Heart left ventricle (tissue), 16 donors: ENCODE measurements at regions of chr1 and their contacts with region 1.

Region 1: GRCh38 chr1:10867138-10867721 is 70.8 kb upstream of the CASZ1 start:
- DNase-seq: peak; percentile 42 to 77 (median 57)
- ATAC-seq: peak in 3 of 4 donors; percentile 38 to 81 (median 77)
- H3K4me3 ChIP-seq: peak overlapping the region in 11 of 12 donors; percentile 18 to 61 (median 49)
- H3K27ac ChIP-seq: peak overlapping the region in 2 of 12 donors; percentile 23 to 65
- H3K4me1 ChIP-seq: peaks cover 0 to 35% (median 13%) of the 10 kb centered on the region in 12 donors
- H3K27me3 ChIP-seq: peaks cover 0 to 67% (median 13%) of the 10 kb centered on the region in 9 donors
- CTCF ChIP-seq: peak; percentile 26 to 96 (median 78)
- POLR2A ChIP-seq: no peak

Region 2: DNA sequence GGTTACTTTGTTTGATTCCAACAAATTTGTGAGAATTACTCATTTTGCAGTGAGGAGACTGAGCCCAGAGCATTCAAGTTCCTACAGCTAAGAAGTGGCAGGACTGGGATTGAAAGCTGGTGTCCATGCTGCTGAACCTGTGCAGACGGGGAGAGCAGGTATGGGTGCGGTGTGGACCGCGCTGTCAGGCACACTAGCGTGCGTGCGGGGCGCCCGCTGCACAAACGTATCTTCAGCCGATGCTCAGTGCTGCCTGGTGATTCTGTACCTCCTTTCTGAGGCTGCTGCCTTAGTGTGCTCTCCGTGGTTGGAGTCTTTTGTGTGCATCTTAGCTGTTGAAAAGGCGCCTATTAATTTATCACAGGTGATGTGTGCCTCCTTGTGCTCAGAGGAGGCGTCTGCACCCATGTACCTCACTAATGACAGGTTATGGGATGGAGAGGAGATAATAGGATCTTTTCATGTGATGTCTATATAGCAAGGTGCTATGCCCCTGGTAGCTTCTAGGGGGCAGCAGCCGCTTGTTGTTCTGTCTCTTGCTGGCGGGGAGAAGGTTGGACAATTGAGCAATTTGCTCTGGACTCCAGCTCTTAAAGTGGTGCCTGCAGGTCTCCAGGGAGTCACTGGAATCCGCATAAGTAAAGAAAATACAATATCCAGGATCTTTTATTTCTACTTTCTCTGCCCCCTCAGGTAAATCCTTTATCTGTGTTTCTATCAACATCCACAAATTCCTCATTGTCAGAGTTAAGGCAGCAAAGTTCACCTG is 359.9 kb before region 1 on chr1:
- intact Hi-C with region 1: loop called in 8 of 10 experiments (anchors 1 to 5 kb)
- DNase-seq: peak; percentile 49 to 71 (median 66)
- ATAC-seq: peak; percentile 71 to 90 (median 85)
- H3K4me3 ChIP-seq: no peak overlapping the region
- H3K27ac ChIP-seq: no peak overlapping the region
- H3K4me1 ChIP-seq: peaks cover 0 to 37% (median 26%) of the 10 kb centered on the region in 12 donors
- H3K27me3 ChIP-seq: no peaks in the 10 kb centered on the region
- CTCF ChIP-seq: peak; percentile 73 to 90 (median 80)
- POLR2A ChIP-seq: no peak

Region 3: DNA sequence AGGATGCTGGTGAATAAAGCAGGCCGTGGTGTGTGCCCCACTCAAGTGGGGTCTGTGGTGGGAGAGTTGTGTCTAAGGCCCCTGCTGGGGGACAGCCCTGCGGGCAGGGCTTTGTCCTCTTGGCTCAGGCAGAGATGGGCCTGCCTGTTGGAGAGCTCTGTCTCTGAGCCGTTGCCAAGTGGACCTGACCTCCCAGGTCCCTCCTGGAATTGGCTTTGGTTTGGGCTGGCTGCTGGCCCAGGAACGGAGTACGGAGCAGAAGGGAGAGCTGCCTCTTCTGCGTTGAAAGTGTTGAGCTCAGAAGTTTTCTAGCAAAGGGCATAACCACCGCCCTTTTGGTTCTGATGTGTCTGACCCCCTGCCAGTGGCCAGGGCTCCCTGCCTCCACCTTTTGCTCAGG is 238.5 kb before region 1 on chr1:
- intact Hi-C with region 1: loop called in 1 of 10 experiments (anchors 10 kb)
- DNase-seq: peak; percentile 77 to 89 (median 82)
- ATAC-seq: peak; percentile 66 to 85 (median 78)
- H3K4me3 ChIP-seq: no peak overlapping the region
- H3K27ac ChIP-seq: peak overlapping the region in 7 of 12 donors; percentile 14 to 70 (median 34)
- H3K4me1 ChIP-seq: peaks cover 0 to 14% (median 9%) of the 10 kb centered on the region in 12 donors
- H3K27me3 ChIP-seq: no peaks in the 10 kb centered on the region
- CTCF ChIP-seq: no peak
- POLR2A ChIP-seq: no peak

Region 4: GRCh38 chr1:10663678-10664035 is 203.6 kb before region 1 on chr1:
- intact Hi-C with region 1: loop called in 2 of 10 experiments (anchors 10 kb)
- DNase-seq: peak; percentile 65 to 85 (median 75)
- ATAC-seq: peak; percentile 71 to 78 (median 76)
- H3K4me3 ChIP-seq: peak overlapping the region in 1 of 12 donors; percentile 16
- H3K27ac ChIP-seq: peak overlapping the region; percentile 78 to 98 (median 91)
- H3K4me1 ChIP-seq: peaks cover 4 to 66% (median 44%) of the 10 kb centered on the region in 12 donors
- H3K27me3 ChIP-seq: no peaks in the 10 kb centered on the region
- CTCF ChIP-seq: no peak
- POLR2A ChIP-seq: peak; percentile 31 to 34

Region 5: DNA sequence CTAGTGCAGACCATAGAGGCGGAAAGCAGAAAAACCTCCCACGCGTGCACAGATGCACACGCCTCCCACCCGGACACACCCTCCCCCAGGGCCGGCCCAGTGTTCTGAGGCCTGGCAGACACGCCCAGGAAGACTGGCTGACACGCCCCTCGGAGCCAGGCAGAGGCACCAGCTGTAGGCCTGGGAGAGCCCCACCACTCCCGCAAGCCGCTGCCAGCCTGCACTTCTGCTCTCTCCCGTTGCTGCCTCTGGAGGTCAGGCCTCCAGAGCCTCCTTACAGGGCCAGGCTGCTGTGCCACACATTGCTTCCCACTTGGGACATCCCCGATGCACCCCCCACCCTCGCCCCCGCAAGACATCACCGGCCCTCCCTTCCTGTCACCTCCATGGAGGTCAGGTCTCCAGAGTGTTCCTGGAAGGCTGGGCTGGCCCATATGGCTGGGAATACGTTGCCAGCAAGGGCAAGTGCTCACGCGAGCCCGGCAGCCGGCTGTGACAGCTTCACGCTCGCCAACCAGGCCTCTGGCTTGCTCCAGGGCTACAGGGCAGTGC is 111.2 kb before region 1 on chr1:
- intact Hi-C with region 1: loop called in 1 of 10 experiments (anchors 10 kb)
- DNase-seq: peak; percentile 74 to 85 (median 82)
- ATAC-seq: peak; percentile 77 to 90 (median 82)
- H3K4me3 ChIP-seq: no peak overlapping the region
- H3K27ac ChIP-seq: peak overlapping the region; percentile 37 to 77 (median 69)
- H3K4me1 ChIP-seq: peaks cover 4 to 70% (median 41%) of the 10 kb centered on the region in 12 donors
- H3K27me3 ChIP-seq: no peaks in the 10 kb centered on the region
- CTCF ChIP-seq: peak in 1 of 12 donors; percentile 15
- POLR2A ChIP-seq: no peak